PC-3 (cell line): ENCODE measurements at regions of chr10 and their contacts with region 1.

Region 1: GRCh38 chr10:74837743-74838142 is 11.3 kb downstream of the KAT6B start:
- DNase-seq: no peak
- ATAC-seq: no peak
- H3K4me3 ChIP-seq: no peak overlapping the region
- H3K27ac ChIP-seq: no peak overlapping the region
- H3K4me1 ChIP-seq: peaks cover 25% of the 10 kb centered on the region
- H3K27me3 ChIP-seq: no peaks in the 10 kb centered on the region
- CTCF ChIP-seq: no peak

Region 2: DNA sequence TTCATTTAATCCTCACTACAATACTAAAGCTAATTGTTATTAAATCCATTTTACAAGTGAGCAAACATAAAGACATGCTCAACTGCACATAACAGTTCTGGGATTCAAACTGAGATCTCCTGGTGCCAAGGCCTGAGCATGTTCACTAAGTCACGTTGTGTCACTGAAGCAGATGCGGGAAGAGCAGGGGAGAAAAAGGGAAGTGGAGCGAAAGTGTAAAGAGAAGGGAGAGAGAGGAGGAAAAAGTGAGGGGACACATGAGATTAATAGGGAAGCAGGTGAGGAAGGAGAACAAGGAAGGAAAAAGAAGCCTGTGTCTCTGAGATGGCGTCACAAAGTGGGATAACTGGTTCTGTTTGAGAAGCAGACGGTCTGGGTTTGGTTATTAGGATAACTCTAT is 50.3 kb before region 1 on chr10:
- CTCF ChIA-PET with region 1: no interaction called
- POLR2A ChIA-PET with region 1: interaction called, 34 read pairs
- intact Hi-C with region 1: no loop called
- DNase-seq: no peak
- ATAC-seq: no peak
- H3K4me3 ChIP-seq: no peak overlapping the region
- H3K27ac ChIP-seq: no peak overlapping the region
- H3K4me1 ChIP-seq: peaks cover 9% of the 10 kb centered on the region
- H3K27me3 ChIP-seq: no peaks in the 10 kb centered on the region
- CTCF ChIP-seq: no peak

Region 3: DNA sequence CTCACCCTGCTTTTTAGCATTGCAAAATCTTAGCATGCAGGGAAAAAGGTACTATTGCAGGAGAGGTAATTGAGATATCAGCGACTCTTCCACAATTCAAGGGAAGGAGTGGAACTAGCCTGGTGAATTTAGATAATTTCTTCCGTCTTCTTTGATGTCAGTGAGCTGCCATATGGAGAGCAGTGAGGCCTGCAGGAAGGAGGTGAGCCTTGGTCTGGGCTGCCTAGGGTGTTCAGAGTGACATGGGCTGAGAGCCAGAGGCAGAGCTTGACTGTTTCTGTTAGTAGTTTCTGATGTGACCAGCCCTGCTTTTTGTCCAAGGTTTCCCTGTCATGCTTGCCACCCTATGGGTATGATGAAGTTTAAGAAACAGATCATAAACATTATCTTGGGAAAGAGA is 17.3 kb after region 1 on chr10:
- CTCF ChIA-PET with region 1: no interaction called
- POLR2A ChIA-PET with region 1: no interaction called
- intact Hi-C with region 1: no loop called
- DNase-seq: no peak
- ATAC-seq: peak; percentile 35
- H3K4me3 ChIP-seq: no peak overlapping the region
- H3K27ac ChIP-seq: no peak overlapping the region
- H3K4me1 ChIP-seq: no peaks in the 10 kb centered on the region; the same call in 1 of the 2 replicates
- H3K27me3 ChIP-seq: no peaks in the 10 kb centered on the region
- CTCF ChIP-seq: no peak